Adrenal gland (tissue), 19 donors: ENCODE measurements at regions of chr1 and their contacts with region 1.

Region 1: GRCh38 chr1:167548059-167548932 is 5.3 kb downstream of the CREG1 start:
- DNase-seq: peak in 1 of 7 donors; percentile 39
- H3K4me3 ChIP-seq: peak overlapping the region in 1 of 4 donors; percentile 27
- H3K27ac ChIP-seq: peak overlapping the region; percentile 37 to 88 (median 79)
- H3K4me1 ChIP-seq: peaks cover 27 to 30% of the 10 kb centered on the region in 2 donors
- H3K27me3 ChIP-seq: no peaks in the 10 kb centered on the region
- CTCF ChIP-seq: no peak
- POLR2A ChIP-seq: no peak

Region 2: GRCh38 chr1:167273027-167273800 is 275.1 kb before region 1 on chr1:
- intact Hi-C with region 1: loop called in 1 of 2 experiments (anchors 10 kb)
- DNase-seq: no peak
- H3K4me3 ChIP-seq: no peak overlapping the region
- H3K27ac ChIP-seq: no peak overlapping the region
- H3K4me1 ChIP-seq: peaks cover 4 to 27% of the 10 kb centered on the region in 2 donors
- H3K27me3 ChIP-seq: no peaks in the 10 kb centered on the region
- CTCF ChIP-seq: no peak
- POLR2A ChIP-seq: no peak